Activated T-helper 1 cell treated with anti-CD3 and anti-CD28 coated beads, Interleukin-12 subunit alpha, Interleukin-12 subunit beta, Interleukin-2, Interleukin-4 antibody, amounts not matched to agents 30 ng/mL and 10 ng/mL and 1 ng/mL, durations not matched to agents 14 hours and 24 hours and 36 hours (primary cell): ENCODE measurements at regions of chr14 and their contacts with region 1.

Region 1: GRCh38 chr14:34018564-34019244 is 67.8 kb upstream of the EGLN3 start:
- DNase-seq: peak; percentile 12
- H3K4me3 Mint-ChIP-seq: peak overlapping the region; percentile 80
- H3K27ac Mint-ChIP-seq: peak overlapping the region; percentile 92
- H3K4me1 Mint-ChIP-seq: peaks cover 36% of the 10 kb centered on the region
- H3K27me3 Mint-ChIP-seq: peaks cover 2% of the 10 kb centered on the region

Region 2: GRCh38 chr14:33938131-33938949 is 80.4 kb before region 1 on chr14:
- intact Hi-C with region 1: no loop called
- DNase-seq: no peak
- H3K4me3 Mint-ChIP-seq: no peak overlapping the region
- H3K27ac Mint-ChIP-seq: no peak overlapping the region
- H3K4me1 Mint-ChIP-seq: peaks cover 61% of the 10 kb centered on the region
- H3K27me3 Mint-ChIP-seq: peaks cover 5% of the 10 kb centered on the region

Region 3: GRCh38 chr14:34059855-34060638 is 41.3 kb after region 1 on chr14:
- intact Hi-C with region 1: loop called (anchors 1 kb)
- DNase-seq: peak; percentile 66
- H3K4me3 Mint-ChIP-seq: peak overlapping the region; percentile 83
- H3K27ac Mint-ChIP-seq: peak overlapping the region; percentile 87
- H3K4me1 Mint-ChIP-seq: peaks cover 48% of the 10 kb centered on the region
- H3K27me3 Mint-ChIP-seq: peaks cover 4% of the 10 kb centered on the region

Region 4: GRCh38 chr14:34098045-34098984 is 79.6 kb after region 1 on chr14:
- intact Hi-C with region 1: loop called (anchors 5 kb)
- DNase-seq: peak; percentile 21
- H3K4me3 Mint-ChIP-seq: no peak overlapping the region
- H3K27ac Mint-ChIP-seq: no peak overlapping the region
- H3K4me1 Mint-ChIP-seq: peaks cover 61% of the 10 kb centered on the region
- H3K27me3 Mint-ChIP-seq: peaks cover 3% of the 10 kb centered on the region

Region 5: GRCh38 chr14:34211732-34212131 is 193.0 kb after region 1 on chr14:
- intact Hi-C with region 1: loop called (anchors 5 kb)
- DNase-seq: no peak
- H3K4me3 Mint-ChIP-seq: peak overlapping the region; percentile 22
- H3K27ac Mint-ChIP-seq: peak overlapping the region; percentile 47
- H3K4me1 Mint-ChIP-seq: peaks cover 22% of the 10 kb centered on the region
- H3K27me3 Mint-ChIP-seq: peaks cover 5% of the 10 kb centered on the region